ENCODE measurements at regions of chr11 and their contacts with region 1.

Region 1: DNA sequence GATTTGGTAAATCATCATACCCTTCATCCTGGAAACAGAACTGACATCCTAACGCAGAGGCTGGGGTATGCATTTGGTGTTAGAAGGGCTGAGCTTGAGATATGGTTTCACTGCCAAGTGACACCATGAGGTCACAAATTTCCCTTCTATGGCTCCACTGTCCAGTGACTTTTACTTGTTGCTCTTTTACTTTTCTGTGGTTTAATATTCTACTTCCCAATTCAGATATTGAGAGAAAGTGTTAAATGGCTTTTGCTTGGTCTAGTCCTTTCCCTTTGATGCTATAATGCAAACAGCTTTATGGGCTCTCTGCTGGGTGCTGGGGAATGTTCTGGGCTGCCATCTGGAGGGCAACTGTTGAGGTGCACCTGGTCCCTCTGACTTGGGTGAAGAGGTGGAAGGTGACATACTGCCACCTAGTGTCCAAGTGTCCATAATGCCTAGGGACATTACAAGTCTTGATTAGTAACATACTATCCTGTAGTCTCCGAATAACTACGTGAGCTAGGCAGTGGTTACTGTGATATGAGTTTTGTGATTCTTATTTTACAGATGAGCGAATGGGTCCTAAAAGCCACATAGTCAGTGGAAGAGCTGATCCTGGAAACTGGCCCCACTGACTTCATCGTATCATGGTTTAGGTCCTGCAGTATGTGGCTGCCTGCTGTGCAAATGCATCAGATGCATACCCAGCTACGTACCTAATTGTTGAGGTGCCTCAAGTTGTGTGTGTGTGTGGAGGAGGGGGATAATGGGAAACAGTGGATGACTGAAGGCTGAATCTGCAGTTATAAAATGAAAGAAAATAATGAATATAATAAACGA is 149.1 kb upstream of the RAG2 start:
- DNase-seq: peak; percentile 49 to 92
- ATAC-seq: peak; percentile 96 to 99
- H3K4me3 ChIP-seq: no peak overlapping the region
- H3K27ac ChIP-seq: no peak overlapping the region
- H3K4me1 ChIP-seq: no peaks in the 10 kb centered on the region
- CTCF ChIP-seq: peak; percentile 99
- EP300 ChIP-seq: no peak
- POLR2A ChIP-seq: no peak
- RAD21 ChIP-seq: peak; percentile 75 to 83

Region 2: GRCh38 chr11:36577859-36578258 is 169.2 kb before region 1 on chr11:
- CTCF ChIA-PET with region 1: interaction called, 15 read pairs
- POLR2A ChIA-PET with region 1: no interaction called
- DNase-seq: no peak
- ATAC-seq: no peak
- H3K4me3 ChIP-seq: no peak overlapping the region
- H3K27ac ChIP-seq: no peak overlapping the region
- H3K4me1 ChIP-seq: no peaks in the 10 kb centered on the region
- CTCF ChIP-seq: no peak
- EP300 ChIP-seq: no peak
- POLR2A ChIP-seq: no peak
- RAD21 ChIP-seq: no peak

Region 3: GRCh38 chr11:36702330-36703055 is 44.6 kb before region 1 on chr11:
- CTCF ChIA-PET with region 1: interaction called, 124 read pairs
- POLR2A ChIA-PET with region 1: interaction called, 5 read pairs
- DNase-seq: peak; percentile 73
- ATAC-seq: peak; percentile 91 to 98
- H3K4me3 ChIP-seq: no peak overlapping the region
- H3K27ac ChIP-seq: no peak overlapping the region
- H3K4me1 ChIP-seq: no peaks in the 10 kb centered on the region
- CTCF ChIP-seq: peak; percentile 80
- EP300 ChIP-seq: no peak
- POLR2A ChIP-seq: no peak
- RAD21 ChIP-seq: peak; percentile 87 to 89

Region 4: GRCh38 chr11:36719358-36720107 is 27.6 kb before region 1 on chr11:
- CTCF ChIA-PET with region 1: interaction called, 22 read pairs
- POLR2A ChIA-PET with region 1: no interaction called
- DNase-seq: no peak
- ATAC-seq: peak in 1 of 2 experiments; percentile 39; a peak in 1 of 6 replicates
- H3K4me3 ChIP-seq: no peak overlapping the region
- H3K27ac ChIP-seq: no peak overlapping the region
- H3K4me1 ChIP-seq: no peaks in the 10 kb centered on the region
- CTCF ChIP-seq: no peak
- EP300 ChIP-seq: no peak
- POLR2A ChIP-seq: no peak
- RAD21 ChIP-seq: no peak

Measured in A549 (cell line).